ENCODE measurements at regions of chr21 and their contacts with region 1.

Region 1: GRCh38 chr21:38733973-38734546 is 71.7 kb upstream of the ETS2 start:
- DNase-seq: peak; percentile 79
- CTCF ChIP-seq: peak; percentile 87

Region 2: GRCh38 chr21:39141502-39141901 is 407.4 kb after region 1 on chr21:
- in situ Hi-C with region 1: loop called (anchors 10 kb)
- DNase-seq: no peak
- CTCF ChIP-seq: no peak

Measured in GM13976 (cell line).